Activated CD4-positive, alpha-beta memory T cell treated with anti-CD3 and anti-CD28 coated beads for 36 hours (primary cell): ENCODE measurements at regions of chr6 and their contacts with region 1.

Region 1: DNA sequence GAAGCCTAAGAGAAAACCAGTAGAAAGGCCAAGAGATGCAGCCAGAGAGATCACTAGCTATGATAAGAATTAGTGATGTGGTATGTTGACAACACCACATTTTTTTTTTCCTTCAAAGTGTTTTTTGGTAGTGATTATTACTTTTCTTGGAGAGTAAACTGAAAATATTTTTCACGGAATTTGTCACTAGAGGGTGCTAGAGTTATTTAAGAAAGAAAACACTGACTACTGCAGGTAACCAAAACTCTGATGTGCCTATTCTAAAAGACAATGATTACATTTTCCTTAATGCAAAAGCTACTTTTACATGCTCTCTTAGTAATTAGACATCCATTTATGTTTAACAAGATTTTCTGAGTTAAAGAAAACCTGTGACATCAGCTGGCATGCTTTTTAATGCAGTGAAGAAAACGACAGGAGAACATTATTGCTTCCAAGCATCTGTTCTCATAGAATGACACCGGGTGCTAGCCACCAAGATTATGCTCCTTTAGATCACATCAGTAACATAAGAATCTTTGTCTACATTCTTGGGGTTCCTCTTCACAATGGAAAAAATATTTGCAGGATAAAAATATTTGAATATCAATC is 28.8 kb downstream of the RWDD2A start:
- DNase-seq: no peak
- H3K4me3 Mint-ChIP-seq: no peak overlapping the region
- H3K27ac Mint-ChIP-seq: no peak overlapping the region
- H3K4me1 Mint-ChIP-seq: no peaks in the 10 kb centered on the region
- H3K27me3 Mint-ChIP-seq: no peaks in the 10 kb centered on the region

Region 2: GRCh38 chr6:83270971-83271719 is 49.2 kb after region 1 on chr6:
- CTCF ChIA-PET with region 1: no interaction called
- POLR2A ChIA-PET with region 1: no interaction called
- intact Hi-C with region 1: no loop called
- DNase-seq: no peak
- H3K4me3 Mint-ChIP-seq: no peak overlapping the region
- H3K27ac Mint-ChIP-seq: no peak overlapping the region
- H3K4me1 Mint-ChIP-seq: peaks cover 4% of the 10 kb centered on the region
- H3K27me3 Mint-ChIP-seq: peaks cover 4% of the 10 kb centered on the region

Region 3: DNA sequence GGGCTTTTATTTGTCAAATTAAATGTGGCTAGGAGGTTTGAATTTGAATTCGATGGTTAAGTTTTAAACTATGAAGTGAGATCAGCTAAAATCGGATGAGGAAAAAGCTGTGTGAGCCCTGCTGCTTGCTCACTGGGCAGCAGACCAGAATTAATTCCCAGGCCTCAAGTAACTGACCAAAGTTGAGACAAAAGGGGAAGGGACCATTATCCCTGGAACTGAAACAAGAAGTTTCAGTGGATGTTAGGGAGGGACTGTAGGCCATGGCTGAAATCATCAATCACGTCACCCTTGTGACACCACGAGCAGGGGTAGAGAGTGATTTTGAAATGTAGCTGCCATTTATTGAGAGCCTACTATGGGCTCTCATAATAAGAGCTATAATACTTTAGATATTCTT is 283.4 kb after region 1 on chr6:
- CTCF ChIA-PET with region 1: interaction called, 174 read pairs
- POLR2A ChIA-PET with region 1: no interaction called
- intact Hi-C with region 1: no loop called
- DNase-seq: no peak
- H3K4me3 Mint-ChIP-seq: no peak overlapping the region
- H3K27ac Mint-ChIP-seq: no peak overlapping the region
- H3K4me1 Mint-ChIP-seq: no peaks in the 10 kb centered on the region
- H3K27me3 Mint-ChIP-seq: no peaks in the 10 kb centered on the region

Region 4: DNA sequence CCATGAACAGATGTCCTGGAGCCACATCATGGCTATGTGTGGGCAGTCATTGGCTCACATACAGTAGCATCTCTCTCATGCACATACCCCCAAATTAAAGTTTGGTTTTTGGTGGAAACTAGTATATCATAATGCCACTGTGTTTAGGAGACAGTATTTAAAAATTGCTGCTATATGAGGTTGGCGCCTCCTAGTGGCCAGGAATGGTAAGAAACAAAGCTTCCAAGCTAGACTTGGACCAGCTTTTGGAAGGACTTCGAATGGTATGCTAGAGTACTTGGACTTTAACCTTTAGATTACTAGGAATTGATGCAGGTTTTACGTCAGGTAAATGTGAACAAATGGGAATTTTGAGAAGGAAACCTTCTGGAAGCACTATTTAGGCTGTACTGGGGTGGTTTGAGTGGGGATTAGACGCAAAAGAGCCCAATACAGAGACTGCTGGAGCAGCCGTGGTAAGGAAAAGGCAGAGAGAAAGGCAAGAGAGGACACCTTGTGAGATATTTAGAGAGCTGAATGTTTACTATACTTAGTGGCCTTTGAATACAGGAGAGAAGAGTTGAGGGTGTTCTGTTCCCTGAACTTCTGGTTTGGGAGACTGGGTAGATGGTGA is 314.2 kb after region 1 on chr6:
- CTCF ChIA-PET with region 1: interaction called, 10 read pairs
- POLR2A ChIA-PET with region 1: no interaction called
- intact Hi-C with region 1: no loop called
- DNase-seq: peak; percentile 56
- H3K4me3 Mint-ChIP-seq: no peak overlapping the region
- H3K27ac Mint-ChIP-seq: no peak overlapping the region
- H3K4me1 Mint-ChIP-seq: no peaks in the 10 kb centered on the region
- H3K27me3 Mint-ChIP-seq: peaks cover 2% of the 10 kb centered on the region